Right ventricle myocardium inferior (tissue), 1 donor: ENCODE measurements at regions of chrX and their contacts with region 1.

Region 1: GRCh38 chrX:21756785-21757529 is 959 bp downstream of the SMPX start:
- DNase-seq: no peak
- ATAC-seq: peak; percentile 88

Region 2: DNA sequence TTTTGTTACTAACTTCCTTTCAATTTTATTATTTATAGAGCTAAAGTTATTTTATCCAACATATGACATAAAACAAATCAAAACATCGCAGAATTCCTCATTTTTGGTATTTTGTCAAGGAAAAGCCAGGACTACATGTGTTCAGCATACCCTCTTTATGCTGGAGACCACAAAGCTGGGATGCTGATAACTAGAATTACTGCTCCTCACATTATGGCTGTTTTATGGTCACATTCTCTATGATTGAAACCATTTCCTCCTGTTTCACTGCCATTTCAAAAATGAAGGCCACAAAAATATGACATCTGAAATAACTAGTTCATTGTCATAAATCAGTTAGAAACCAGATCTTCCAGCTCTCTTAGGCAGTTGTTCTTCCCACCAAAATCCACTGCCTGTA is 140.6 kb before region 1 on chrX:
- intact Hi-C with region 1: no loop called
- DNase-seq: no peak
- ATAC-seq: no peak

Region 3: GRCh38 chrX:21798677-21799219 is 41.8 kb after region 1 on chrX:
- intact Hi-C with region 1: loop called (anchors 5 kb)
- DNase-seq: no peak
- ATAC-seq: peak; percentile 46

Region 4: DNA sequence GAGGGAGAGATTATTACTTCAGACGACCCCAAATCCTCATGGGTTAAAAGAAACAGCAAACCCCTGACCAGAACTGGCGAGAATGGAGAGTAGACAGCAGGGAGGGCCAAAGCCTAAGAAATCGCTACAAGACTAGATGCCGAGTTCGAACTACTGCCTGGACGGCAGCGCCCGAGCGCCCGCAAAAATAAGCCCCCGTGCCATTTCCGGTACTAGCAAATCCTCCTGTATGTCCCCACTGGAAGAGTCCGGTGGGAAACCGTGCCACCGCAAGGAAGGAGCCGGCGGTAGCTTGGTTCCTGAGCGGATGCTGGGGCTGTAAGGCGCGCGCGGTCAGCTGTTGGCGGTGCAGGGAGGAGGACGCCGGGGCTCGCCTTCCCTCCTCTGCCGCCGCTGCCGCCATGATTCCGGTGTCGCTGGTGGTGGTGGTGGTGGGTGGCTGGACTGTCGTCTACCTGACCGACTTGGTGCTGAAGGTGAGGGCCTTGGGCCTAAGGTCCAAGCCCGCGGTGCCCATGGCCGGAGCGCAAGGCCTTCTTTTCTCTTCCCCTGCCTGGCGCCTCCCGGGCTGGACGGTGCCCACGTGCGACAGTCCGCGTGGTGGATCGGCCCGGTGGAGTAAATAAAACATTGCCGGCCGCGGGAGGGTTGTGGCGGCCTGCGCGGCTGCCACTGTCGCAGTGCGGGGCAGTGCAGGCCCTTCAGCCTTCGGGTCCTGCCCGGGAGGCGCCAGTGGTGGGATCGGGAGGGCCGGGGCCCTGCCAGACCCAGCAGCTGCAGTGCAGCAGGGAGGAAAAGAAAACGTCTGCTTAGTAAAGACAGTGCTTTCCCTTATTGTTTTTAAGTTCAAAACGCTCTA is 82.6 kb after region 1 on chrX and contains the start of gene MBTPS2:
- intact Hi-C with region 1: loop called (anchors 1 kb)
- DNase-seq: peak; percentile 88
- ATAC-seq: peak; percentile 95
- total RNA-seq, gene MBTPS2: 8.3 TPM

Region 5: DNA sequence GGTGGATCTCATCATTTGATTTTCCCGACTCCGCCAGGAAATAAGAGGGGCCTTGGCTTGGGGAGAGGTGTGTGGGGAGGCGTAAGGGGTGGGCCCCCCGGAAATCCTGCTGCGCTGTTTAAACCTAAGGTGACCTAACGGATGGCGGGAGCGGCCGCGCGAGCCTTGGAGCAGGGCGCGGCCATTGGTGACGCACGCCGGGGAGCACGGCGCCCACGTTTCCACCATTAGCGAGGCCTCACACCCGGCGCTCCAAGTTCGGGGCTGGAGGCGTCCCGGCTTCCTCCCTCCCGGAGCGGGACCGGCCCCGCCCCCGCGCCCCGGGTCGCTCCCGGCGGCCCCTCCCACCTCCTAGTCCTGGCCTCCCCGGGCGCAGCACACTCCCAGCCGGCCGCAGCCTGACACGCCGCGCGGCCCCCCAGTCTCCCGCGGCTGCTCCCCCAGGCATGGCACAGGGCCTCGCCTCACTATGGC is 183.4 kb after region 1 on chrX and contains the start of gene SMS:
- intact Hi-C with region 1: loop called (anchors 10 kb)
- DNase-seq: peak; percentile 89
- ATAC-seq: peak; percentile 97
- total RNA-seq, gene SMS: 54.4 TPM